CD4-positive, alpha-beta T cell (primary cell): ENCODE measurements at regions of chr11 and their contacts with region 1.

Region 1: GRCh38 chr11:65588199-65589054 is 7.2 kb downstream of the KCNK7 start:
- DNase-seq: peak; percentile 63 to 90 (median 74)
- ATAC-seq: peak; percentile 99
- H3K4me3 ChIP-seq: no peak overlapping the region
- H3K4me3 Mint-ChIP-seq: no peak overlapping the region
- H3K27ac ChIP-seq: peak overlapping the region; percentile 1 to 60
- H3K27ac Mint-ChIP-seq: peak overlapping the region; percentile 21
- H3K4me1 ChIP-seq: peaks cover 33% of the 10 kb centered on the region
- H3K4me1 Mint-ChIP-seq: peaks cover 17% of the 10 kb centered on the region
- H3K27me3 ChIP-seq: no peaks in the 10 kb centered on the region
- H3K27me3 Mint-ChIP-seq: no peaks in the 10 kb centered on the region
- CTCF ChIP-seq: peak; percentile 70

Region 2: DNA sequence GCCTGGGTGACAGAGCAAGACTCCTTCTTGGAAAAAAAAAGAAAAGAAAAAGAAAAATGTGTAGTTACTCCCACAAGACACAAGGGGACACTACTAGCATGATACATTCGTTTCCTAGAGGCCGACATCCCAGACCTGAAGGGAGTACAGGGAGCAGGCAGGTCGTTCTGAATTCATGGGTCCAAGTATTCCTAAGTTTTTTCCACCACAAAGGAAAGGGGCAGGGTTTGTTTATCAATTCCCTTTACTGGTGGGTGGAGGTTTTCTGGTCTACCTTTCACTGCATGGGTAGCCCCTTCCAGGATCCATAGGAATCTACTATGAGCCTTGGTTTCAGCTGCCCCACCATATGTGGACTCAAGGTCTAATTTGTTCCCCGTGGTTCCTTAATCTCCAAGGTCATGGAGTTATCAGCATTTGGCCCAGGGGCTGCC is 222.1 kb before region 1 on chr11:
- CTCF ChIA-PET with region 1: no interaction called
- POLR2A ChIA-PET with region 1: no interaction called
- intact Hi-C with region 1: loop called (anchors 1 kb)
- DNase-seq: peak in 4 of 14 experiments; percentile 49 to 78 (median 78)
- ATAC-seq: peak; percentile 85
- H3K4me3 ChIP-seq: no peak overlapping the region
- H3K4me3 Mint-ChIP-seq: no peak overlapping the region
- H3K27ac ChIP-seq: no peak overlapping the region
- H3K27ac Mint-ChIP-seq: no peak overlapping the region
- H3K4me1 ChIP-seq: peaks cover 8% of the 10 kb centered on the region
- H3K4me1 Mint-ChIP-seq: peaks cover 7% of the 10 kb centered on the region
- H3K27me3 ChIP-seq: no peaks in the 10 kb centered on the region
- H3K27me3 Mint-ChIP-seq: no peaks in the 10 kb centered on the region
- CTCF ChIP-seq: peak; percentile 78

Region 3: GRCh38 chr11:65398362-65398910 is 190.0 kb before region 1 on chr11:
- CTCF ChIA-PET with region 1: no interaction called
- POLR2A ChIA-PET with region 1: no interaction called
- intact Hi-C with region 1: no loop called
- DNase-seq: no peak
- ATAC-seq: no peak
- H3K4me3 ChIP-seq: no peak overlapping the region
- H3K4me3 Mint-ChIP-seq: no peak overlapping the region
- H3K27ac ChIP-seq: no peak overlapping the region
- H3K27ac Mint-ChIP-seq: no peak overlapping the region
- H3K4me1 ChIP-seq: no peaks in the 10 kb centered on the region
- H3K4me1 Mint-ChIP-seq: peaks cover 2% of the 10 kb centered on the region
- H3K27me3 ChIP-seq: no peaks in the 10 kb centered on the region
- H3K27me3 Mint-ChIP-seq: no peaks in the 10 kb centered on the region
- CTCF ChIP-seq: no peak

Region 4: GRCh38 chr11:65551572-65552398 is 36.6 kb before region 1 on chr11:
- CTCF ChIA-PET with region 1: interaction called, 11 read pairs
- POLR2A ChIA-PET with region 1: interaction called, 9 read pairs
- intact Hi-C with region 1: no loop called
- DNase-seq: peak; percentile 49 to 83 (median 64)
- ATAC-seq: peak; percentile 37
- H3K4me3 ChIP-seq: no peak overlapping the region
- H3K4me3 Mint-ChIP-seq: peak overlapping the region; percentile 71
- H3K27ac ChIP-seq: no peak overlapping the region
- H3K27ac Mint-ChIP-seq: peak overlapping the region; percentile 82
- H3K4me1 ChIP-seq: peaks cover 88% of the 10 kb centered on the region
- H3K4me1 Mint-ChIP-seq: peaks cover 83% of the 10 kb centered on the region
- H3K27me3 ChIP-seq: no peaks in the 10 kb centered on the region
- H3K27me3 Mint-ChIP-seq: no peaks in the 10 kb centered on the region
- CTCF ChIP-seq: peak; percentile 78

Region 5: DNA sequence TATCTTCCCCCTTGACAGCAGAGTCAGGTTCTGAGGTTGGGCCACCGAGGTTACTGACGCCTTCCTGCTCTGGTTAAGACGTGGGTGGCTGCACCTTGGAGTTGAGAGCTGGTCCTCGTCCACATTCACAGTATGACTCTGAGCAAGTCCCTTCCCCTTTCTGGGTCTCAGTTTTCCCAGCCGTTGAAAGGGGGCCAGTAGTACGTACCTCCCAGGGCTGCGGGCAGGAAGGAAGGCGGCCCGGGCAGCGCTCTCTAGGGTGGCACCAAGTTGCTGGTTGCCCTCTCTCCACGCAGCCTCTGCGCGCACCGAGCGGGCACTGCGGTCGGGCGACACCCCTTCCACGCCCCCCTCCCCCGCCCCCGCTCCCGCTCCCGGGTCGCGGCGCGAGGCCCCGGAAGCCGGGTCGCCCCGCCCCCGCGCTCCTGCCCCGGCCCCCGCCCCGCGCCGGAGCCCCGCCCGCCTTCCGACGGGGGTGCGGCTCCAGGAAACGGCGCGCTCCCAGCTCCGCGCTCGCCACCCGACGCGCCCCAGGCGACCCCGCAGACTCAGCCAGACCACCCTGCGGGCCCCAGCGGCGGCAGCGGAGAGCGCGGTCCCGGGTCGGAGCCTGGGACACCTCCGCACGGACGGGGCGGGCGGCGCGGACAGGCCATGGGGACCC is 12.7 kb before region 1 on chr11 and contains the start of gene EHBP1L1:
- CTCF ChIA-PET with region 1: interaction called, 31 read pairs
- POLR2A ChIA-PET with region 1: interaction called, 28 read pairs
- intact Hi-C with region 1: loop called (anchors 1 kb)
- DNase-seq: peak; percentile 60 to 91 (median 79)
- ATAC-seq: peak; percentile 30
- H3K4me3 ChIP-seq: peak within 1 kb of the TSS; percentile 89
- H3K4me3 Mint-ChIP-seq: peak within 1 kb of the TSS; percentile 98
- H3K27ac ChIP-seq: peak within 1 kb of the TSS; percentile 87 to 99
- H3K27ac Mint-ChIP-seq: peak within 1 kb of the TSS; percentile 98
- H3K4me1 ChIP-seq: peaks cover 77% of the 10 kb centered on the region
- H3K4me1 Mint-ChIP-seq: peaks cover 57% of the 10 kb centered on the region
- H3K27me3 ChIP-seq: no peaks in the 10 kb centered on the region
- H3K27me3 Mint-ChIP-seq: no peaks in the 10 kb centered on the region
- CTCF ChIP-seq: no peak
- total RNA-seq, gene EHBP1L1: 82.6 to 88.5 TPM